ENCODE measurements at regions of chr2 and their contacts with region 1.

Region 1: GRCh38 chr2:96174251-96175144 is 29.3 kb upstream of the DUSP2 start:
- DNase-seq: peak; percentile 80
- CTCF ChIP-seq: peak; percentile 79

Region 2: DNA sequence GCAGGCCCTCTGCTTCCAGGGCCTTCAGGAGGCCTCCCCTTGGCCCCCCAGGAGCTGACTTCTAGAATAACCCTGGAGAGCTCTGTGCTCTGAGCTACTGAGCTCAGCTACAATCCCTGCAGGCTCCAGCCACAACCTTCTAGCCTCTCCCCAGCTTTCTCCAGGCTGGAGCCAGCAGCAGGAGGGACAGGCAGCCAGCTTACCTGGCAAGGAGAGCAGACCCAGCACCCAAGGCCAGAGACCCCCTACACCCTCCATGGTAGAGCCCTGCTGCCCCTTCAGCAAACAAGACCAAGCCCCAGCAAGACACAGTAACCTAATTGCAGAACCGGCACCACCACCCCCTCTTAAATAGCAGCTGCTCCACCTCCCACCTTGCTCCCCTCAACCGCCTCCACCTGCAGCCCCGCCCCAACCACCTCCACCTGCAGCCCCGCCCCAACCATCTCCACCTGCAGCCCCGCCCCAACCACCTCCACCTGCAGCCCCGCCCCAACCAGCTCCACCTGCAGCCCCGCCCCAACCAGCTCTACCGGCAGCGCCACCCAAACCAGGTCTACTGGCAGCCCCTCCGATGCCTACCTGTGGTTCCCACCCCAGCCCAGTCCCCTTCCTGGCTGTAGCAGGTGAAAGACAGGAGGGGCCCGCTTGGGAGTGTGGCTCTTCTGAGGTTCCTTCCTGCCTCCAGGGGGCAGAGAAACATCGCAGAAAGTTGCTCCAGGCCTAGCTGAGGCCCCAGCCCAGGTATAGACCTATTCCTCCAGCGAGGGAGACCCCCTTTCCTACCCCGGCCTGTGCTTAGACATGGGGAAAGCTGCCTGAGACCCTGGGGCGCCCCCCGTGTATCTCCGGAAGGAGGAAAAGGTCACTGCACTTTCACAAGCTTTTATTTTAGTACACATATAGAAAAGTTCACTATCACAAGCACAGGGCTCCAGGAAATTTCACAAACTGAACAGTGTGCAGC is 36.0 kb before region 1 on chr2 and contains the start of gene ASTL:
- in situ Hi-C with region 1: loop called (anchors 5 kb)
- DNase-seq: peak; percentile 82
- CTCF ChIP-seq: peak; percentile 74